HEK293T (cell line): ENCODE measurements at regions of chr10 and their contacts with region 1.

Region 1: GRCh38 chr10:121403527-121403926 is 194.7 kb downstream of the FGFR2 start:
- DNase-seq: no peak

Region 2: GRCh38 chr10:121260376-121260775 is 143.2 kb before region 1 on chr10:
- CTCF ChIA-PET with region 1: no interaction called
- POLR2A ChIA-PET with region 1: no interaction called
- DNase-seq: no peak

Region 3: GRCh38 chr10:121416071-121416470 is 12.5 kb after region 1 on chr10:
- CTCF ChIA-PET with region 1: interaction called, 12 read pairs
- POLR2A ChIA-PET with region 1: no interaction called
- DNase-seq: no peak